ENCODE measurements at regions of chr18 and their contacts with region 1.

Region 1: DNA sequence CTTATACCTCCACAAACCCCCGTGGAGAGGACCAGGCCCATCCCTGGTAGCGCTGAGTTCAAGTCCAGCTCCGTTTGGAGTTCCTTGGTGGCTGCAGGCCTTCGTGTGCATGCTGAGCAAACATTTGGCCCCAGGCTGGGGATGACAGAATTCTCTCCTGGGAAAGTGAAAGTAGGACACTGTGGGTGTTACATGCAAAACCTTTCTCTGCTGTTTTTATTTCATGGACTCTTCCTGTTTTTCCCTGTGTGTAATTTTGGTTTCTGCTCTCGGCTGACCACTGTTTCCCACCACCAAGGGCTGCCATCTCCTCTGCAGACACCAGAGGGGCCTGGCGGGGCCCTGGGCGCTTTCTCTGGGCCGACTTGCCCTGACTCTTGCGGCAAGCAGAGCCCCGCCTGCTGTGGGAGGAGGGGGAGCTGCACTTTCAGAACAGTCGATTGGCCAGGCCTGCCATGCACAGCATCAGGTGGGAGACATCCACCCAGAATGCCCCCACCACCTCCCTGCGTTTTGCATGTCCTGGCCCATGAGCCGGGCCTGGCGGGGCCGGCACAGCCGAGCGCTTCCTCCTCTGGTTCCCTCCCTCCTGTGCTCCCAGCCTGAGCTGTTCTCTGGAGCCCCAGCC is 102.4 kb downstream of the CABLES1 start:
- DNase-seq: peak; percentile 60 to 69 (median 69)
- H3K4me3 ChIP-seq: peak overlapping the region in 4 of 7 experiments; percentile 2 to 59 (median 40)
- H3K27ac ChIP-seq: peak overlapping the region; percentile 34 to 78
- H3K4me1 ChIP-seq: peaks cover 2 to 22% (median 18%) of the 10 kb centered on the region in 4 experiments
- H3K27me3 ChIP-seq: no peaks in the 10 kb centered on the region

Region 2: DNA sequence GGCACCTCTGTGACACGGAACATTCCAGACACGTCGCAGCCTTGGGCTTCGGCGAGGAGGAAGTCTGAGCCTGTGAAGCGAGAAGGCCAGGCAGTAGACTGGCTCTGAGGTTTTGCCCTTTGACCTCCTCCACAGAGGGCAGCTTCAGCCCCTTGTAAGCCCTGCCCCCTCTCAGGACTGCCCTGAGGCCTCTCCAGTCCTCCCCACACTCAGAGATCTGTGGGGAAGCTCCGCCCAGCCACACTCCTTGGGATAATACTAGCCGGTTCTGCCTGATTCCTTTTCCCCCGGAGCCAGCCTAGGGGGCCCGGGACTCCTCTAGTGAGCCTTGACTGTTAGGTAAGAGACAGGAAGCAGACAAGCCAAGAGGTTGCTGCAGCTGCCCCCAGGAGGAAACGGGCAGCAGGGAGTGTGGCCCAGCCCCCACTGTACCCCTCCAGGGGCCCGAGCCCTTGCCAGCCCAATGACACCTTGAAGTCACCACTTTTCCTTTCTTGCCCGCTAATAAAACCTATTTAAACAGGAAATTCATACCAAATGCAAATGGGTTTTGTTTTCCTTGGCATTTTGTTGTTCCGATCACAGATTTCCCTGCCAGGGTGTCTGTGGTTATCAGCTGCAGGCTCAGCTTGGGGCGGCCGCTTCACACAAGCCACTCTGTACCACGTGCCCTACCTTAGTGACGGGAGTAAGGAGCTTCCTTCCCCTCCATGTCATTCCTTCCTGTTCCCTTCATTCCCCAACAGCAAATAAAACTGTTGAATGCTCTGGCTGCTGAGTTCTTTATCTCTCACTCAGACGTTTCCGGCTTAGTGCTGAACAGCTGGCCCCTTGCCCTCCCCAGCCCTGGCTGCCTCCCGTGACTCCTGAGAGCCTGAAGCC is 22.3 kb after region 1 on chr18:
- CTCF ChIA-PET with region 1: interaction called, 31 read pairs
- POLR2A ChIA-PET with region 1: interaction called, 4 read pairs
- DNase-seq: peak; percentile 92 to 98 (median 97)
- H3K4me3 ChIP-seq: peak overlapping the region in 5 of 7 experiments; percentile 12 to 66 (median 44)
- H3K27ac ChIP-seq: peak overlapping the region; percentile 87 to 91
- H3K4me1 ChIP-seq: peaks cover 14 to 54% (median 50%) of the 10 kb centered on the region in 4 experiments
- H3K27me3 ChIP-seq: no peaks in the 10 kb centered on the region

Region 3: GRCh38 chr18:23350188-23350587 is 112.5 kb after region 1 on chr18:
- CTCF ChIA-PET with region 1: no interaction called
- POLR2A ChIA-PET with region 1: no interaction called
- DNase-seq: no peak
- H3K4me3 ChIP-seq: no peak overlapping the region
- H3K27ac ChIP-seq: no peak overlapping the region
- H3K4me1 ChIP-seq: peaks cover 0 to 18% (median 10%) of the 10 kb centered on the region in 4 experiments
- H3K27me3 ChIP-seq: no peaks in the 10 kb centered on the region

Region 4: GRCh38 chr18:23422672-23423418 is 185.2 kb after region 1 on chr18:
- CTCF ChIA-PET with region 1: no interaction called
- POLR2A ChIA-PET with region 1: no interaction called
- DNase-seq: peak; percentile 47 to 91 (median 88)
- H3K4me3 ChIP-seq: no peak overlapping the region
- H3K27ac ChIP-seq: no peak overlapping the region
- H3K4me1 ChIP-seq: peaks cover 0 to 15% (median 11%) of the 10 kb centered on the region in 4 experiments
- H3K27me3 ChIP-seq: no peaks in the 10 kb centered on the region

Measured in common myeloid progenitor, CD34-positive (primary cell).